ENCODE measurements at regions of chr2 and their contacts with region 1.

Region 1: DNA sequence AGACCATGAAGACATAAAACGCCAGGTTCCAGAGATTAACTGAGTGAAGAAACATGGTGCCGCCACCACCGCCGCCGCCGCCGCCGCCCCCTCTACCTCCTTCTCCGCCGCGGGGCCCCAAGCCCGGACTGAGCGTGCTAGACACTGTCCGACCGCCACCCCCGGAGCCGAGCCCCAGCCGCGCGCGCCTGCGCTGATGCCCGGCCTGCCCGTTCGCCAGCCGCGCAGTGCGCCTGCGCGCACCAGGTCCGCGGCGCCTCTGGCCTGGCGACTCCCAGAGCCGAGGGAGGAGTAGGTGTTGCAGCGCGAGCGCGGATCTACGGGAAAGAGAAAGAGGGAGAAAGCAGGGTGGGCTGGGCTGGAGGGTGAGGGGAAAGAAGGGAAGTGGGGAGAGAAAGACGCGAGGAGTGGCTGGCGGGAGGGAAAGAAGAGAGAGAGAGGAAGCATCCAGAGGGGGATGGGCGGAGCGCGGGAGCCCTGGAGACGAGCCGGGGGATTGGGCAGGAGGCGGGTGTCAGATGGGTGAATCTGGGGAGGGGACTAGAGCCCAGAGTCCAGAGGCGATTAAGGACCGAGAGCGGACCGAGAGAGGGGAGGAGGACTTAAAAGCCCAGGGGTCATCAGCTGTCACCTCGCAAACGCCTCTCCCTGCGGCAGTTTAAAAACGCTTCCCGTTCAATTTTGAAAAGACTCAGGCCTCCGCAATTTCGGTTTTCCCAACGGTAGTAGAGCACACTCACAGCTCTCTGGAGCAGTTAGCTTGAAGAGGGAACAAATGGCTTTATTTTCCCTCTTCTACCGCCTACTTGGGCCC is at the start of gene PGAP1:
- DNase-seq: peak; percentile 93
- H3K4me3 ChIP-seq: peak within 1 kb of the TSS; percentile 48 to 91 (median 80)
- H3K27ac ChIP-seq: peak within 1 kb of the TSS; percentile 89 to 95 (median 92)
- H3K4me1 ChIP-seq: peaks cover 0 to 24% (median 16%) of the 10 kb centered on the region in 4 donors
- H3K27me3 ChIP-seq: no peaks in the 10 kb centered on the region
- CTCF ChIP-seq: no peak
- EP300 ChIP-seq: no peak
- POLR2A ChIP-seq: peak in 1 of 2 donors; percentile 47
- total RNA-seq, gene PGAP1: 6.6 to 14.0 (median 8.1) TPM

Region 2: DNA sequence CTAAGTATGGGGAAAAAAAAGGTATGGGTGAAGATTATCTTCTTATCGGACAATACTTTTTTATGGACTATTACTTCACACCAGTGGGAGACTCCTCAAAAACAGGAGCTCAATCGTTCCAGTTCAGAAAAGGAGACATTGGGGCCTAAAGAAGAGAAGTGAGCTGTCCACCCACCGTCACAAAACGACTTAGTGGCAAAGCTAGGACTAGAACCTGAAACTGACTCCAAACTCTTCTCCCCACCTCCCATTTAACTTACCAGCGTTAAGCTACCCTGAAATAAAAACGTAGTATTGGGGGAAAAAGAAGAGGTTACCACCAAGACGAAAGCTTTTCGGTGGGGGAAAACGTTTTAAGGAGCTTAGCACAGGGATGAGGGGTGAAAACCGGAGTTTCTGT is 127.8 kb before region 1 on chr2:
- intact Hi-C with region 1: loop called (anchors 2 kb)
- DNase-seq: no peak
- H3K4me3 ChIP-seq: peak overlapping the region; percentile 59 to 73 (median 70)
- H3K27ac ChIP-seq: peak overlapping the region; percentile 76 to 82 (median 78)
- H3K4me1 ChIP-seq: peaks cover 0 to 30% (median 15%) of the 10 kb centered on the region in 4 donors
- H3K27me3 ChIP-seq: peaks cover 0 to 8% (median 0%) of the 10 kb centered on the region in 3 donors
- CTCF ChIP-seq: no peak
- EP300 ChIP-seq: no peak
- POLR2A ChIP-seq: no peak

Region 3: DNA sequence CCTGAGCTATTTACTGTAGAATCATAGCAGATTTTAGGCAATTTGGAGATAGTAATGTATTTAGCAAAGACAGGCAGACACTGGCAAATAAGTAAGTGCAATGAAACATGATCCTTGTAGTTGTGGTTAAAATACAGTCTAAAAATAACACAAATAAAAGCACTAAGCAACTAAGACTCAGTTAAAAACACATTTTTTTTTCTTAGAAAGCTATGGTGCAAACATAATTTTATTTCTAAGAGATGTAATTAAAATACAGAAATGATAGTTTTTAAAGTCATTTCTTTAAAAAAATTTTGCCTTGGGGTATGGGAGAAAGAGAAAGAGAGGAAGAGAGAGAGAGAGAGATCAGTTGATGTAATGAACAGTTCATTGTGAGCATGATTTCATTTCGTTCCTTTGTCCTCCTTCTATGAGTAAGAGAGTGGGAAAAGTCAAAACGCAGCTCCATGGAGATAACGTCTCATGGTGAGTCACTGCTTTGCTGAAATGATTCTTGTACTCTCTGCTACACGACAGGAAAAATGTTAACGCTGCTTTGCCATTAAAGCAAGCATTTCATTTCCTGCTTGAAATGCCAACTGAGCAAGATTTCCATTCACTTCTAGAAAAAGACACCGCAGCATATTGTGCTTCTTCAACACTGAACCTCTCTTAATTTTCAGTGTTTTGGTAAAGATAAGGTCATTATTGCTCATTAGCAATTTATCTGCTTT is 61.0 kb after region 1 on chr2:
- intact Hi-C with region 1: loop called (anchors 2 kb)
- DNase-seq: no peak
- H3K4me3 ChIP-seq: peak overlapping the region in 2 of 4 donors; percentile 3 to 7
- H3K27ac ChIP-seq: peak overlapping the region; percentile 22 to 68 (median 62)
- H3K4me1 ChIP-seq: peaks cover 0 to 17% (median 12%) of the 10 kb centered on the region in 4 donors
- H3K27me3 ChIP-seq: no peaks in the 10 kb centered on the region
- CTCF ChIP-seq: no peak
- EP300 ChIP-seq: no peak
- POLR2A ChIP-seq: no peak

Region 4: GRCh38 chr2:197191177-197191939 is 264.6 kb after region 1 on chr2:
- intact Hi-C with region 1: loop called (anchors 10 kb)
- DNase-seq: no peak
- H3K4me3 ChIP-seq: no peak overlapping the region
- H3K27ac ChIP-seq: no peak overlapping the region
- H3K4me1 ChIP-seq: peaks cover 0 to 51% (median 20%) of the 10 kb centered on the region in 4 donors
- H3K27me3 ChIP-seq: no peaks in the 10 kb centered on the region
- CTCF ChIP-seq: peak; percentile 15 to 80 (median 62)
- EP300 ChIP-seq: no peak
- POLR2A ChIP-seq: no peak